Activated naive CD4-positive, alpha-beta T cell treated with anti-CD3 and anti-CD28 coated beads, Interleukin-2, amount 10 ng/mL, durations not matched to agents 7 days and 5 days (primary cell): ENCODE measurements at regions of chr1 and their contacts with region 1.

Region 1: GRCh38 chr1:34786521-34787325 is 5.7 kb downstream of the GJB3 start:
- DNase-seq: peak; percentile 79
- H3K4me3 Mint-ChIP-seq: no peak overlapping the region
- H3K27ac Mint-ChIP-seq: no peak overlapping the region
- H3K4me1 Mint-ChIP-seq: peaks cover 4% of the 10 kb centered on the region
- H3K27me3 Mint-ChIP-seq: peaks cover 55% of the 10 kb centered on the region

Region 2: GRCh38 chr1:34852677-34853217 is 66.0 kb after region 1 on chr1:
- CTCF ChIA-PET with region 1: interaction called, 25 read pairs
- DNase-seq: peak; percentile 94
- H3K4me3 Mint-ChIP-seq: no peak overlapping the region
- H3K27ac Mint-ChIP-seq: no peak overlapping the region
- H3K4me1 Mint-ChIP-seq: peaks cover 24% of the 10 kb centered on the region
- H3K27me3 Mint-ChIP-seq: no peaks in the 10 kb centered on the region